GM12878 (cell line): ENCODE measurements at regions of chr19 and their contacts with region 1.

Region 1: GRCh38 chr19:50777754-50778303 is 7.6 kb downstream of the GPR32 start:
- DNase-seq: no peak
- ATAC-seq: no peak
- H3K4me3 ChIP-seq: no peak overlapping the region
- H3K27ac ChIP-seq: no peak overlapping the region
- H3K4me1 ChIP-seq: no peaks in the 10 kb centered on the region
- H3K27me3 ChIP-seq: peaks cover 4 to 8% of the 10 kb centered on the region in 2 experiments
- CTCF ChIP-seq: no peak
- EP300 ChIP-seq: no peak
- POLR2A ChIP-seq: no peak
- RAD21 ChIP-seq: no peak

Region 2: GRCh38 chr19:50368649-50369570 is 408.9 kb before region 1 on chr19:
- CTCF ChIA-PET with region 1: no interaction called
- POLR2A ChIA-PET with region 1: no interaction called
- RAD21 ChIA-PET with region 1: no interaction called
- SMC1A ChIA-PET with region 1: interaction called, 3 read pairs
- in situ Hi-C with region 1: no loop called
- intact Hi-C with region 1: loop called (anchors 1 kb)
- DNase-seq: peak; percentile 78
- ATAC-seq: peak; percentile 86
- H3K4me3 ChIP-seq: peak overlapping the region; percentile 93
- H3K27ac ChIP-seq: peak overlapping the region; percentile 82
- H3K4me1 ChIP-seq: peaks cover 19% of the 10 kb centered on the region
- H3K27me3 ChIP-seq: no peaks in the 10 kb centered on the region
- CTCF ChIP-seq: peak; percentile 79 to 81 (median 79)
- EP300 ChIP-seq: no peak
- POLR2A ChIP-seq: peak; percentile 69
- RAD21 ChIP-seq: peak; percentile 77

Region 3: GRCh38 chr19:50537762-50538230 is 240.0 kb before region 1 on chr19:
- CTCF ChIA-PET with region 1: interaction called, 11 read pairs
- POLR2A ChIA-PET with region 1: no interaction called
- RAD21 ChIA-PET with region 1: interaction called, 3 read pairs
- SMC1A ChIA-PET with region 1: interaction called, 8 read pairs
- in situ Hi-C with region 1: no loop called
- intact Hi-C with region 1: loop called (anchors 2 kb)
- DNase-seq: no peak
- ATAC-seq: peak; percentile 88
- H3K4me3 ChIP-seq: no peak overlapping the region
- H3K27ac ChIP-seq: no peak overlapping the region
- H3K4me1 ChIP-seq: peaks cover 8% of the 10 kb centered on the region
- H3K27me3 ChIP-seq: no peaks in the 10 kb centered on the region
- CTCF ChIP-seq: peak; percentile 77 to 83 (median 82)
- EP300 ChIP-seq: no peak
- POLR2A ChIP-seq: no peak
- RAD21 ChIP-seq: peak; percentile 58

Region 4: GRCh38 chr19:50607874-50608785 is 169.7 kb before region 1 on chr19:
- CTCF ChIA-PET with region 1: no interaction called
- POLR2A ChIA-PET with region 1: no interaction called
- RAD21 ChIA-PET with region 1: no interaction called
- SMC1A ChIA-PET with region 1: no interaction called
- in situ Hi-C with region 1: no loop called
- intact Hi-C with region 1: loop called (anchors 1 kb)
- DNase-seq: peak; percentile 15
- ATAC-seq: peak; percentile 92
- H3K4me3 ChIP-seq: no peak overlapping the region
- H3K27ac ChIP-seq: no peak overlapping the region
- H3K4me1 ChIP-seq: no peaks in the 10 kb centered on the region
- H3K27me3 ChIP-seq: no peaks in the 10 kb centered on the region
- CTCF ChIP-seq: peak; percentile 37 to 47 (median 44); a peak in 5 of 6 replicates
- EP300 ChIP-seq: no peak
- POLR2A ChIP-seq: no peak
- RAD21 ChIP-seq: 0 out of 2 replicates have a peak, but pooled peaks have one; percentile 6

Region 5: DNA sequence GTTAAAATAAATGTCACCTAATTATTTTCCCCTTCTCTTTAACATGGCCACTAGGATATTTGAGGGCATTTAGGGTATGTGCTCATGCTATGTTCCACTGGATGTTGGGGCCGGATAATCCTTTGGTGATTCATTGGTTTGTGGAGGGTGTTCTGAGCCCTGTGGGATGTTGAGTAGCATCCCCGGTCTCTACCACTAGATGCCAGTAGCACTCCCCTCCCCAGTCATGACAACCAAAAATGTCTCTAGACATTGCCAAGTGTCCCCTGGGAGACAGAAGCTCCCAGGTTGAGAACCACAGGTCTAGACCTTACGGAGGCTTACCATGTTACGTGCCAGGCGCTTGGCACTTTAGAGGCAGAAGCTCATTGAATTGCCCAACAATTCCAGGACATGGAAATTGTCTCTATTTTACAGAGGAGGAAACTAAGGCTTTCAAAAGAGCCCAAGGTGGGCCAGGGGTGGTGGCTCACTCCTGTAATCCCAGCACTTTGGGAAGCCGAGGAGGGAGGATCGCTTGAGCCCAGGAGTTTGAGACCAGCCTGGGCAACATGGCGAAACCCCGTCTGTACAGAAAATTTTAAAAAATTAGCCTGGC is 72.3 kb before region 1 on chr19:
- CTCF ChIA-PET with region 1: interaction called, 9 read pairs
- POLR2A ChIA-PET with region 1: no interaction called
- RAD21 ChIA-PET with region 1: interaction called, 3 read pairs
- SMC1A ChIA-PET with region 1: interaction called, 4 read pairs
- in situ Hi-C with region 1: no loop called
- intact Hi-C with region 1: loop called (anchors 2 kb)
- DNase-seq: peak; percentile 21
- ATAC-seq: peak; percentile 96
- H3K4me3 ChIP-seq: no peak overlapping the region
- H3K27ac ChIP-seq: no peak overlapping the region
- H3K4me1 ChIP-seq: no peaks in the 10 kb centered on the region
- H3K27me3 ChIP-seq: no peaks in the 10 kb centered on the region; a peak in 1 of 4 replicates
- CTCF ChIP-seq: peak; percentile 65 to 84 (median 73)
- EP300 ChIP-seq: no peak
- POLR2A ChIP-seq: no peak
- RAD21 ChIP-seq: peak; percentile 62

Region 6: GRCh38 chr19:51187395-51188226 is 409.8 kb after region 1 on chr19:
- CTCF ChIA-PET with region 1: no interaction called
- POLR2A ChIA-PET with region 1: no interaction called
- RAD21 ChIA-PET with region 1: no interaction called
- SMC1A ChIA-PET with region 1: no interaction called
- in situ Hi-C with region 1: no loop called
- intact Hi-C with region 1: no loop called
- DNase-seq: no peak
- ATAC-seq: no peak
- H3K4me3 ChIP-seq: no peak overlapping the region
- H3K27ac ChIP-seq: no peak overlapping the region
- H3K4me1 ChIP-seq: no peaks in the 10 kb centered on the region
- H3K27me3 ChIP-seq: peaks cover 1 to 4% of the 10 kb centered on the region in 2 experiments; a peak in 2 of 4 replicates
- CTCF ChIP-seq: no peak
- EP300 ChIP-seq: no peak
- POLR2A ChIP-seq: no peak
- RAD21 ChIP-seq: no peak